Activated naive CD4-positive, alpha-beta T cell treated with anti-CD3 and anti-CD28 coated beads for 36 hours (primary cell): ENCODE measurements at regions of chr2 and their contacts with region 1.

Region 1: GRCh38 chr2:99559075-99559662 is 69.4 kb upstream of the REV1 start:
- DNase-seq: peak; percentile 94
- H3K4me3 Mint-ChIP-seq: no peak overlapping the region
- H3K27ac Mint-ChIP-seq: no peak overlapping the region
- H3K4me1 Mint-ChIP-seq: peaks cover 1% of the 10 kb centered on the region
- H3K27me3 Mint-ChIP-seq: no peaks in the 10 kb centered on the region

Region 2: DNA sequence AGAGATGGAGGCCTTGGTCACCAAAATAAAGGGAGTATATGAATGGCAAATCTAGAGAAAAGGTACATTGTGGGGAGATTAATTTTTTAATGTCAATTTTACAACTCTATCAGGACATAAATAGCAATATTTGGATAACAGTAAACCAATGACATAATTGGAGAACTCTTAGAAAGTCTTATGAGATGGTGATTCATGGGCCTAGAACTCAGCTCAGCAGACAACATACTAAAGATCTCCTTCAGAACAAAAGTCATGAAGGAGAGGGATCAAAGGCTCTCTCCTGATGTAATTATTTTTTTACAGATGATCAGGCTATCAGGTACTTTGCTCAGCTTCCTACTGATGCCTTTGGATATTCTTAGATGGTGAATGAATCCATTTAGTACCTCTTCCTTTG is 713.1 kb before region 1 on chr2:
- CTCF ChIA-PET with region 1: no interaction called
- intact Hi-C with region 1: no loop called
- DNase-seq: no peak
- H3K4me3 Mint-ChIP-seq: no peak overlapping the region
- H3K27ac Mint-ChIP-seq: no peak overlapping the region
- H3K4me1 Mint-ChIP-seq: no peaks in the 10 kb centered on the region
- H3K27me3 Mint-ChIP-seq: peaks cover 2% of the 10 kb centered on the region

Region 3: GRCh38 chr2:99806758-99807157 is 247.6 kb after region 1 on chr2:
- CTCF ChIA-PET with region 1: no interaction called
- intact Hi-C with region 1: loop called (anchors 10 kb)
- DNase-seq: no peak
- H3K4me3 Mint-ChIP-seq: no peak overlapping the region
- H3K27ac Mint-ChIP-seq: no peak overlapping the region
- H3K4me1 Mint-ChIP-seq: no peaks in the 10 kb centered on the region
- H3K27me3 Mint-ChIP-seq: no peaks in the 10 kb centered on the region

Region 4: DNA sequence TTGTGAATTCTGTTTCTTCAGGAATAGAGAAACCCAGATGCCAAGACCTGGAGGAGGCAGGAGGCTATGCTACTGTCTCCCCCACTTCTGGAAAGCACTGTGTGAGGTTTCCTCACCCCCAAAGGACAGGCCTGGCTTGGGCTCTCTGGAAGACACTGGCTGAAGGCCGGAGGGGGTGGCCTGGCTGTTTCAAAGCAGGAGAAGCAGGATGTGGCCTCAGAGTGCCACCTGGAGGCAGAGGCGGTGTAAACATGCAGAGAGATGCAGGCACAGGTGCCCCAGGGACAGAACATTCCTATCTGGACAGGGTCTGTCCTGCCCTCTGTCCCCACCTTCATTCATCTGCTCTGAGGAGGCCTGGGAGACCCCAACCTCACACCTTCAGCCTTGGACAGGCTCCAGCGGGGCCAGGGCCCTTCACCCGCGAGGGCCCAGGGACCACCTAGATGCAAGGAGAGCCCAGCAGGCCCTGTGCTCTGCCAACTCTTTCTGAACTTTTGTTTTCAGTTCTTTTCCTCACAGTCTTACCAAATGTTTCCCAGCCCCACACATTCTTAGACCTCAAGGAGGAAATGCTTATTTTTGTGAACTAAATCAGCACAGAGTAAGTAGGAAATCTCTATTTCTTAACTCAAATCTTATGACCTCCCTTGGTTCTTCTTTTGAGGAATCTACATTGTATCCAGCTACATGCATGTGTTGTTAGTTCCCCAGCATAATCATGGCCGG is 683.9 kb after region 1 on chr2:
- CTCF ChIA-PET with region 1: interaction called, 31 read pairs
- intact Hi-C with region 1: loop called (anchors 1 kb)
- DNase-seq: peak; percentile 75
- H3K4me3 Mint-ChIP-seq: no peak overlapping the region
- H3K27ac Mint-ChIP-seq: no peak overlapping the region
- H3K4me1 Mint-ChIP-seq: peaks cover 2% of the 10 kb centered on the region
- H3K27me3 Mint-ChIP-seq: peaks cover 9% of the 10 kb centered on the region

Region 5: GRCh38 chr2:100262555-100263320 is 703.6 kb after region 1 on chr2:
- CTCF ChIA-PET with region 1: interaction called, 13 read pairs
- intact Hi-C with region 1: loop called (anchors 5 kb)
- DNase-seq: peak; percentile 78
- H3K4me3 Mint-ChIP-seq: no peak overlapping the region
- H3K27ac Mint-ChIP-seq: no peak overlapping the region
- H3K4me1 Mint-ChIP-seq: no peaks in the 10 kb centered on the region
- H3K27me3 Mint-ChIP-seq: no peaks in the 10 kb centered on the region

Region 6: DNA sequence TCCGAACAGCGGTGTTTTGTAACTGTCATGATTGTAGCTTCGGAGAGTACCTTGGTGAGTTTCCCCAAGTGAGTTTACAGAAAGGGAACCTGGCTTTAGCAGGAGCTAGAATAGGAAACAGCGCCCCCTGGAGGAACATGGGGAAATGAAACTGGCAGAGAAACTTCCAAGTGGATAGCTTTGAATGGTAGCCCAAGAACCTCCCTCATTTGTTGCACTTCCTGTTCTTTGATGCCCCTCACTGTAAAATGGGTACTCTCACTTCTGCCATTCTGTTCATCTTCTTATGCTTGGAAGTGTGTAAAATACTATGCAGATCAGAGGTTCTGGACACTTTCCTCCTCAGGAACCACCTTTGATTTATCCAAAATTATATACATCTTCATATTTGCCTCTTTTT is 822.1 kb after region 1 on chr2:
- CTCF ChIA-PET with region 1: interaction called, 5 read pairs
- intact Hi-C with region 1: loop called (anchors 2 kb)
- DNase-seq: peak; percentile 89
- H3K4me3 Mint-ChIP-seq: no peak overlapping the region
- H3K27ac Mint-ChIP-seq: no peak overlapping the region
- H3K4me1 Mint-ChIP-seq: no peaks in the 10 kb centered on the region
- H3K27me3 Mint-ChIP-seq: no peaks in the 10 kb centered on the region